Head of caudate nucleus (tissue), 42 donors: ENCODE measurements at regions of chr14 and their contacts with region 1.

Region 1: GRCh38 chr14:50311975-50312733 is at the starts of genes DMAC2L and L2HGDH:
- DNase-seq: peak; percentile 80 to 98 (median 95)

Region 2: DNA sequence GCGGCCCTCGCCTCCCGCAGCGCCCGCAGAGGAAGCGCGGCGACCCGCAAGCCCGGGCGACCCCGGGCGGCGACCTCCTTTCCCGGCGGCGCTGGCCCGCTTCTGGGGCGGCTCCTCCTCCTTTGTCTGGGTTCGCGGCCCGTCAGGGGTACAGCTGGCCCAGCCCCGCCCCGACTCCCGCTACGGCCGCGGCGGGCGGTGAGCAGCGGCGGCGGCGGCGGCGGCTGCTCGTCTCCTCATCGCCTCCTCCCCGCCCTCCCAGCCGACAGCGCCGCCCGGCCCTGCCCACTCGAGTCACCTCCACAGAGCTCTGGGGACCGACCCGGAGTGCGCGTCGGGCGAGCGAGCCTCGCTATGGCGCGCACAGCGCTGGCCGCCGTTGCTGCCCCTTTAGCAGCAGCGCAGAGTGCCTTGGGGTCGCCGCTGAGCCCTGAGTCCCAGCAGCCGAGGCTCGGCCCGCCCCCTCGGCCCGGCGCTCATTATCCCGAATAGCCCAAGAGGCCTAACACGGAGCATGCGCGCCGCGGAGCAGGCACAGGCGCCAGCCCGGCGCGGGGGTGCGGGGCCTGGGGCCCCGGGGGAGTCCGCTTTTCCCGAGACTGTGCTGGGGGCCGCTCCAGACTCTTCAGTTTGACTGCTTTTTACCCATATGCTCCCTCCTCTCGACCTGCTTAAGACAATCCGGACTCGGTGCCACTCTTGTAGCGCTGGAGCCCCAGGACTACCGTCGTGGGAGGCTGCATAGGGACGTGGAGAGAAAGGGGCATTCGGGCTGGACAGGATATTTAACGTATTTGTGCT is 80.5 kb before region 1 on chr14 and contains the start of gene SOS2:
- intact Hi-C with region 1: loop called (anchors 5 kb)
- DNase-seq: peak; percentile 68 to 94 (median 88)